WTC11 (cell line): ENCODE measurements at regions of chr1 and their contacts with region 1.

Region 1: GRCh38 chr1:206479183-206480125 is 9.2 kb downstream of the IKBKE start:
- DNase-seq: peak; percentile 76
- ATAC-seq: peak; percentile 89
- H3K4me3 Mint-ChIP-seq: no peak overlapping the region
- H3K27ac Mint-ChIP-seq: no peak overlapping the region
- H3K4me1 Mint-ChIP-seq: peaks cover 4% of the 10 kb centered on the region
- H3K27me3 Mint-ChIP-seq: no peaks in the 10 kb centered on the region
- CTCF ChIP-seq: peak; percentile 70

Region 2: DNA sequence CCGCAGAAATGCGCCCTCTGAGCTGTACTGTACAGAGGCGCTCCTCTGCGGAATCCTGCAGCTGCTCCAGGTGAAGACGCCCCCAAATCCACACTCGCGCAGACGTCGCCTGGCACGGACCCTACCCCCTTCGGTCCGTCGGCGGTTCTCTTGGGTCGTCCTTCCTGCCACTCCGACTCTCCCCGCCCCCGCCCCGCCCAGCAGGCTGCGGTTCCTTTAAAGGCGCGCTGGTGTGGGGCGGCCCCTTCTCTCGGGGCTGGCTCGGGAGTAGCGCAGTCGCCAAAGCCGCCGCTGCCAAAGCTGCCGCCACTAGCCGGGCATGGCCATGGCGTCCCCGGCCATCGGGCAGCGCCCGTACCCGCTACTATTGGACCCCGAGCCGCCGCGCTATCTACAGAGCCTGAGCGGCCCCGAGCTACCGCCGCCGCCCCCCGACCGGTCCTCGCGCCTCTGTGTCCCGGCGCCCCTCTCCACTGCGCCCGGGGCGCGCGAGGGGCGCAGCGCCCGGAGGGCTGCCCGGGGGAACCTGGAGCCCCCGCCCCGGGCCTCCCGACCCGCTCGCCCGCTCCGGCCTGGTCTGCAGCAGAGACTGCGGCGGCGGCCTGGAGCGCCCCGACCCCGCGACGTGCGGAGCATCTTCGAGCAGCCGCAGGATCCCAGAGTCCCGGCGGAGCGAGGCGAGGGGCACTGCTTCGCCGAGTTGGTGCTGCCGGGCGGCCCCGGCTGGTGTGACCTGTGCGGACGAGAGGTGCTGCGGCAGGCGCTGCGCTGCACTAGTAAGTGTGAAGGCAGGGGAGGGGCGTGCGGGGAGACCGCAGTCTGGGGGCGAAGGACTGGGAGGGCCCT is 28.1 kb after region 1 on chr1 and contains the start of gene RASSF5:
- CTCF ChIA-PET with region 1: interaction called, 10 read pairs
- POLR2A ChIA-PET with region 1: no interaction called
- DNase-seq: peak; percentile 87
- ATAC-seq: peak; percentile 87
- H3K4me3 Mint-ChIP-seq: peak within 1 kb of the TSS; percentile 68
- H3K27ac Mint-ChIP-seq: no peak within 1 kb of the TSS
- H3K4me1 Mint-ChIP-seq: peaks cover 25% of the 10 kb centered on the region
- H3K27me3 Mint-ChIP-seq: peaks cover 76% of the 10 kb centered on the region
- CTCF ChIP-seq: no peak
- total RNA-seq, gene RASSF5: 1.7 to 2.1 TPM (median 1.7 TPM) in 3 replicates

Region 3: DNA sequence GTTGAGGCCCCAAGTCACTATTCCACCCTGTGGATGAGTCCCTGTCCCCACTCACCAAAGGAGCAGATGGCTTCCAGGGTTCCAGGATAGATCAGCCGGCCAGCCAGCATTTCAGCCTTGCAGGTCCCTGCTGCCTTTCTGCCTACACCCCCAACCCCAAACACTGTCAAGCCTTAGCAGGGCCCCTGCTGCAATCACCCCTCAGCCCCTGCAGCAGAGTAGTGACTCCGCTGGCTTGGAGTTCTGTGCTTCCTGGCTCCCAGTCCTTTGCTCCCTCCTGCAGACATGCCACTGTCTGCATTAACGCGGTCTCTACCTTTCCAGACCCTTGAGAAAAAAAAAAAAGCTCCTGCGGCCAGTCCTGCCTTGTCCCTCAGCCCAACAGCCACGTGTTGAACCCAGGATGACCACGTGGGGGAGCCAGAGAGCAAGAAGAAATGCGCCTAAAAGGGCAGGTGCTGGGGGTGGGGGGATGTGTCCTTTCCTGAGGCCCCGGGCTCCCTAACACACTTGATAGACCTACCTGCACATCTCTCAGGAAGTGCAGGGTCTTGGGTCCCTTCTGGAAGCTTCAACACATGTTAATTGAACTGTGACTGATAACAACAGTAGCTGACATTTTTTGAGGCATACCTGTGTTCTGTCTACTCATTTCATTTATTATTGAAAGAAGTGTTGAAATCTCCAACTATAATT is 65.3 kb after region 1 on chr1:
- CTCF ChIA-PET with region 1: interaction called, 25 read pairs
- POLR2A ChIA-PET with region 1: no interaction called
- DNase-seq: peak; percentile 96
- ATAC-seq: peak; percentile 96
- H3K4me3 Mint-ChIP-seq: no peak overlapping the region; the same call in 1 of the 2 replicates
- H3K27ac Mint-ChIP-seq: no peak overlapping the region
- H3K4me1 Mint-ChIP-seq: peaks cover 8% of the 10 kb centered on the region
- H3K27me3 Mint-ChIP-seq: no peaks in the 10 kb centered on the region
- CTCF ChIP-seq: peak; percentile 78

Region 4: DNA sequence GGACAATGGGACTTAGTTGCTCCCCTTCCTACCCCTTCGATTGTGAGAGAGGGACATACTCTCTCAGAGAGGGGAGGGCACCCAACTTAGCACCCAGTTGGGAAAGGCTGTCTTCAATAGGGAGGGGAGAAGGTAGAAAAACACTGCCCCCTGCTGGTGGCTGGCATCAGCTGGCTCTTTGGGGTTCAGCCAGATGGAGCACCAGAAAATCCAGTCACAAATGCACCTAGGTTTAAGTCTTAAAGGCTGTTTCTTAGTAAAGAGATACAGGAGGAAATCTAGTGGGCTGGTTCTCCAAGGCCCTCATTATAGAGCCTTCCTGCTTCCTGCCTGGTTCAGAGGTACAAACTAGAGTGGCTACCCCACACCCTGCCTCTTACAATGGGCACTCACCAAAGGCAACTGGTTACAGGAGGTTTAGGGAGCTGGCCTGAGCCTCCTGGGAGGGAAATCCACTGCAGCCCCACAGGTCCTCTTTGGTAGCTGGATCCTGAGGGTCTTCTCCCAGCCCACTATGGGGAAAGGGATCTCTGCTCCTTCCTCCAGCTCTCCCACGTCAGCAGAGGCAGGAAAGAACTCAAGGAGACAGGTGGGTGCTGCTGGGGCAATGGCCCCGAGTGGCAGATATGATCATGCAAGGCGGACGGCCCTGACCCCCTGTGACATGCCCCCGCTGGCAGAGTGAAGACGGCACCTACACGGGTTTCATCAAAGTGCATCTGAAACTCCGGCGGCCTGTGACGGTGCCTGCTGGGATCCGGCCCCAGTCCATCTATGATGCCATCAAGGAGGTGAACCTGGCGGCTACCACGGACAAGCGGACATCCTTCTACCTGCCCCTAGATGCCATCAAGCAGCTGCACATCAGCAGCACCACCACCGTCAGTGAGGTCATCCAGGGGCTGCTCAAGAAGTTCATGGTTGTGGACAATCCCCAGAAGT is 104.5 kb after region 1 on chr1:
- CTCF ChIA-PET with region 1: interaction called, 51 read pairs
- POLR2A ChIA-PET with region 1: no interaction called
- DNase-seq: peak; percentile 84
- ATAC-seq: peak; percentile 84
- H3K4me3 Mint-ChIP-seq: no peak overlapping the region
- H3K27ac Mint-ChIP-seq: peak overlapping the region; percentile 79
- H3K4me1 Mint-ChIP-seq: peaks cover 4% of the 10 kb centered on the region
- H3K27me3 Mint-ChIP-seq: no peaks in the 10 kb centered on the region
- CTCF ChIP-seq: peak; percentile 90

Region 5: DNA sequence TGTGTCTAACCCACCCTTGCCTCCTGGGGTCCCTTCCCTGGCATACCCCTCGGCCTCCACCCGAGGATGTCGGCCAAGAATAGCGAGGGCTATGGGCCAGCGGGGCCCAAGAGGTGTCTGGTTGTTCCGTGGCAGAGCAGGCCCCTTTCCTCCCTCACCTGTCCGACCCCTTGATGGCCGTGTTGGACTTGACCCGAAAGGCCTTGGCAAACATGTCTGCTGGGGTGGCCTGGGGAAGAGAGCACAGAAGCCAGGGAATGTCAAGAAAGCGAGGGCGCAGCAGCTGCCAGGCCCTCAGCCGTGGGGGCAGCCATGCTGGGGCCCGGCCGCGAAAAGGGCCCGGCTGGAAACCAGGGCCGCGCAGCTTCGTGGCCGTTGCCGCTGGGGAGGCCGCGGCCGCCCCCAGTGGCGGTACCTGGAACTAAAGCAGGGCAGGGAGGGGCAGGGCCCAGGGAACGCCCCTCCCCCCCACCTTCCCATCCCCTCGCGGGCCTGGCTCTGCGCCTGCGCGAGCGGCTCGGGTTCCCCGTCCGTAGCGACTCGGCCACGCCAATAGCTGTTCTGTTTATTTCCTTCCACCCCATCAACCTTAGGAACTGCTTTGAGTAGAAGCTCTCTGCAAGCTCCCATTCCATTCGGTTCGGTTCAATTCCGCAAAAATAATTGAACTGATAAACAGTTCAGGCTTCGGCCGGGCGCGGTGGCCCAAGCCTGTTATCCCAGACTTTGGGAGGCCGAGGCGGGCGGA is 132.8 kb after region 1 on chr1 and contains the start of gene EIF2D:
- CTCF ChIA-PET with region 1: interaction called, 19 read pairs
- POLR2A ChIA-PET with region 1: no interaction called
- DNase-seq: peak; percentile 95
- ATAC-seq: peak; percentile 98
- H3K4me3 Mint-ChIP-seq: peak within 1 kb of the TSS; percentile 94
- H3K27ac Mint-ChIP-seq: peak within 1 kb of the TSS; percentile 97
- H3K4me1 Mint-ChIP-seq: peaks cover 12% of the 10 kb centered on the region
- H3K27me3 Mint-ChIP-seq: peaks cover 7% of the 10 kb centered on the region
- CTCF ChIP-seq: peak; percentile 88
- total RNA-seq, gene EIF2D: 35.7 to 36.8 TPM (median 35.9 TPM) in 3 replicates